Activated CD4-positive, alpha-beta T cell treated with anti-CD3 and anti-CD28 coated beads, Interleukin-2, amount 10 ng/mL, durations not matched to agents 24 days and 14 days (primary cell): ENCODE measurements at regions of chr4 and their contacts with region 1.

Region 1: GRCh38 chr4:185183619-185184281 is 20.1 kb downstream of the CFAP97 start:
- DNase-seq: peak; percentile 92
- H3K4me3 Mint-ChIP-seq: no peak overlapping the region
- H3K27ac Mint-ChIP-seq: no peak overlapping the region
- H3K4me1 Mint-ChIP-seq: peaks cover 9% of the 10 kb centered on the region
- H3K27me3 Mint-ChIP-seq: no peaks in the 10 kb centered on the region

Region 2: DNA sequence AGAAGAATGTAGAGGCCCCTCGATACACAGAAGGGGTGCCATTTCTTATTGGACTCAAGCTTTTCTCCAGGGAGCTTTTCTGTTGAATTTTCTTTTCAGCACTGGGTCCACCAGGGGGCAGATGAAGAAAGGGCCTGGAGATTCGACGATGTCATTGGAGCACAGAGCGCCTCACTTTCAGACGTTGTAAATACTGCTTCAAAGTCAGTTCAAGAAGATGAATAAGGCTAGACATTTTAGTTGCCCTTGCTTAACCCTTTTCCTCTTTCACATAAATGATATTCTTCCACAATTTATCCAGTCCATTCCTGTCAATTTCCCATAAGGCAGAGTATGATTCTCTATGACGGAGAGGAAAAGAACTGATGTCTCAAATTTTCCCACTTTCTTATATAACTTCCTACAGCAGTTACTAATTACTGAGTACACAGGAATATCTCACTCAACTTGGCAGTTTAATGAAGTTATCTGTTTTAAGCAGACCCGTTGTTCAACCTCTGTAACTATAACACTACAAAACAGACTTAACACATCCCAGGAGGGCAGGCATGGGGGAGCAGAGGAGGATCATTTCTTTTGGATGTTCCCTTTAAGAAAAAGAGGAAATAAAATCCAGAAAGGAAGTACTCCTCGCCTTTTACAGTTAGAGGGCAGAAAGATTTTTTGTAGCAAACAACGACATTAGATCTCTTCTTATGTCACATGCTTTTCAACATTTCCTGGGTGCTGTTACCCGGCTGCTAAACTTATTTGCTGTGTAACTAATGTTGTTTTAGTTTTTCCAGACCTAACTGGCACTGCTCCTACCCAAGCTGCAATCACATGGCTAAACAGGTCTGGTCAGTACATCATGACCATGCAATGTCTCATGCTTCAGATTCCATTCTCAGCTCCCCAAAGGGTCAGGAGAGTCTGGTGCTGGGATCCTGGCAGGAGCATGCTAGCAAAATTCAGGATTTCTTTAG is 437.6 kb before region 1 on chr4:
- intact Hi-C with region 1: no loop called
- DNase-seq: peak; percentile 93
- H3K4me3 Mint-ChIP-seq: peak overlapping the region; percentile 15
- H3K27ac Mint-ChIP-seq: peak overlapping the region; percentile 32
- H3K4me1 Mint-ChIP-seq: peaks cover 10% of the 10 kb centered on the region
- H3K27me3 Mint-ChIP-seq: peaks cover 1% of the 10 kb centered on the region

Region 3: GRCh38 chr4:185165605-185166063 is 18.1 kb before region 1 on chr4:
- intact Hi-C with region 1: loop called (anchors 1 kb)
- DNase-seq: peak; percentile 76
- H3K4me3 Mint-ChIP-seq: peak overlapping the region; percentile 20
- H3K27ac Mint-ChIP-seq: peak overlapping the region; percentile 85
- H3K4me1 Mint-ChIP-seq: peaks cover 14% of the 10 kb centered on the region
- H3K27me3 Mint-ChIP-seq: peaks cover 18% of the 10 kb centered on the region

Region 4: DNA sequence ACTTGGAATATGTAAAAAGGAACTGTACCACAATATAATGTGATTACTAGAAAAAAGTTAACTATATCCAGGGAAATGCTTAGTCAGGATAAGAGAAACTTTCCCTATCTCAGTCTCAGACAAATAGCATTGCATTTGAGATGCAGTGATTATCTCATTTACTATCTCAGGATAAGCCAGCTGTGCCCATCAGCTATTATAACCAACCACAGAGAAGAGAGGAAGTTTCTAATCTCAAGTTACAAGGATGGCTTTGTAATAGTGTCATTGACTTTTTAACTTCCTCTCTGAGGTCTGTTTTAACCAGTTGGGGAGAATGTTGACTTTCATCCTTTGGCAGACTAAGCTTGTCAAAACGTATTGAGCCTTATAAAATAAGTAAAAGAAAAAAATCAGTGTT is 82.2 kb after region 1 on chr4:
- intact Hi-C with region 1: no loop called
- DNase-seq: peak; percentile 52
- H3K4me3 Mint-ChIP-seq: no peak overlapping the region
- H3K27ac Mint-ChIP-seq: no peak overlapping the region
- H3K4me1 Mint-ChIP-seq: peaks cover 23% of the 10 kb centered on the region
- H3K27me3 Mint-ChIP-seq: no peaks in the 10 kb centered on the region

Region 5: GRCh38 chr4:185457136-185457535 is 273.4 kb after region 1 on chr4:
- intact Hi-C with region 1: no loop called
- DNase-seq: no peak
- H3K4me3 Mint-ChIP-seq: no peak overlapping the region
- H3K27ac Mint-ChIP-seq: no peak overlapping the region
- H3K4me1 Mint-ChIP-seq: no peaks in the 10 kb centered on the region
- H3K27me3 Mint-ChIP-seq: peaks cover 29% of the 10 kb centered on the region